BJ (cell line): ENCODE measurements at regions of chr11 and their contacts with region 1.

Region 1: DNA sequence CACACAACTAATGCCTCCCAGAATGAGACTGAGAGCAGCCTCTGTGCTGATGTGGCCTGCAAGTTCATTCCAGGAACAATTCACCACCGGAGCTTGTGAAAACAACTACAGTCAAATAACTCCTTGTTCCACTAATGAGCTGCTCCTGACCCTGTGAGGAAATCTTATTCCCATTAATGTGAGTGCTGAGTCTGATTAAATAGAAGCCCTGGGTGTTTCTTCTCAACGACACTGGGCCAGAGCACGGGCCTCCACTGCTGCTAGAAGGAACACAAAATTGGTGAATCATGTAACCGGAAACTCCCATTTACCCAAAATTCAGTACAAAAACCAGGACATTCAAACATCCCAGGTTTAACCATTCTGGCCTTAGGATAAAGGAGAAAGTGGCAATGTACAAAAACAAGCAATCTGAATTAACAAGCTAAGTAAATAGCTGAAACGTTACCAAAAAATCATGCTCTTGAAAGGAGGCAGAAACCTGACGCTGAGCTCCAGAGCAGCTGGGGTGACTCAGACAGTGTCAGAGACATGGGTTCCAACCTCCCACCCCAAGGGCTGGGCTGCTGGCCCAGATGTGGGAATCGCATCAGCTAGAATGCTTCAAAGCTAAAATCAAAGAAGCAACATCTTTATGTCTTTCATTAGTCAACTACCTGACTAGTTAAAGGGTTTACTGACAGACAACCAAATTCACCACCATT is 26.7 kb downstream of the SERGEF start:
- DNase-seq: peak; percentile 47
- H3K4me3 ChIP-seq: no peak overlapping the region
- H3K27me3 ChIP-seq: no peaks in the 10 kb centered on the region
- CTCF ChIP-seq: no peak

Region 2: GRCh38 chr11:17519061-17519885 is 466.9 kb before region 1 on chr11:
- CTCF ChIA-PET with region 1: no interaction called
- POLR2A ChIA-PET with region 1: no interaction called
- DNase-seq: no peak
- H3K4me3 ChIP-seq: no peak overlapping the region
- H3K27me3 ChIP-seq: peaks cover 7% of the 10 kb centered on the region
- CTCF ChIP-seq: no peak

Region 3: GRCh38 chr11:17760102-17761029 is 225.8 kb before region 1 on chr11:
- CTCF ChIA-PET with region 1: interaction called, 181 read pairs
- POLR2A ChIA-PET with region 1: no interaction called
- DNase-seq: no peak
- H3K4me3 ChIP-seq: no peak overlapping the region
- H3K27me3 ChIP-seq: no peaks in the 10 kb centered on the region; the same call in 1 of the 2 replicates
- CTCF ChIP-seq: peak; percentile 74

Region 4: GRCh38 chr11:17876827-17877226 is 109.3 kb before region 1 on chr11:
- CTCF ChIA-PET with region 1: no interaction called
- POLR2A ChIA-PET with region 1: no interaction called
- DNase-seq: no peak
- H3K4me3 ChIP-seq: no peak overlapping the region
- H3K27me3 ChIP-seq: no peaks in the 10 kb centered on the region
- CTCF ChIP-seq: no peak

Region 5: DNA sequence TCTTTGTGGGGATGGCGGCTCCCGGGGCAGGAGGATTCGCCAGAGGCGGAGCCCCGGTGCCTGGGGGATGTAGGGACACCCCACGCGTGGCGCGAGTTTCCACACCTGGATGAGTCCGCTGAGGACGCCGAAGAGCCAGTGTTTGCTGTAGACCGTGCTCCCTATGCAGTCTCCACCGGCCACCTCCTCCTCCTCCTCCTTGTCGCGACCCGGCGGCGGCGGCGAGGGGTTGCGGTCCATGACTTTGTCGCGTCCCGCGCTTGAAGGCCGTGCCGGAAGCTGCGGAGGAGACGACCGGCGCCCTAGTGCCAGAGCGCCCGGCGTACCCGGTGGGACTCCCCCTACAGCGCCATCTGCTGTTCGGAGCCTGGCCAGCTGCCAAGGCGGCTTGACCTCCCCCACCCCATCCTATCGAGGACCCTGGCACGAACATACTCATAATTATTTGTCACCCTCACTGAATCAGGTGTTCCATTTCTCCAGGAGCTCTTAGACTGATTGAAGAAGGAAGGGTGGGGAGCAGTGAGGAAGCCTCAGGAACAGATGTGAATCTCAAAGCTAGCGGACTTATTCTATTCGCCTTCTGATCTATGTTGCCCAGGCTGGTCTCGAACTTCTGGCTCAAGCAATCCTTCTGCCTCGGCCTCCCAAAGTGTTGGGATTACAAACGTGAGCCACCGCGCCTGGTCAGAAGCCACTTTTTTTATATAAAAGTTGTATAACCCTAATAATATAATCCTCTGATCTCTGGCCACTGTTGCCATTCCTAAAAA is 119.8 kb after region 1 on chr11 and contains the start of gene SAAL1:
- CTCF ChIA-PET with region 1: interaction called, 13 read pairs
- POLR2A ChIA-PET with region 1: no interaction called
- DNase-seq: no peak
- H3K4me3 ChIP-seq: peak within 1 kb of the TSS; percentile 96
- H3K27me3 ChIP-seq: no peaks in the 10 kb centered on the region; the same call in 1 of the 2 replicates
- CTCF ChIP-seq: peak; percentile 75
- polyA plus RNA-seq, gene SAAL1: 8.9 and 13.3 TPM in 2 replicates

Region 6: DNA sequence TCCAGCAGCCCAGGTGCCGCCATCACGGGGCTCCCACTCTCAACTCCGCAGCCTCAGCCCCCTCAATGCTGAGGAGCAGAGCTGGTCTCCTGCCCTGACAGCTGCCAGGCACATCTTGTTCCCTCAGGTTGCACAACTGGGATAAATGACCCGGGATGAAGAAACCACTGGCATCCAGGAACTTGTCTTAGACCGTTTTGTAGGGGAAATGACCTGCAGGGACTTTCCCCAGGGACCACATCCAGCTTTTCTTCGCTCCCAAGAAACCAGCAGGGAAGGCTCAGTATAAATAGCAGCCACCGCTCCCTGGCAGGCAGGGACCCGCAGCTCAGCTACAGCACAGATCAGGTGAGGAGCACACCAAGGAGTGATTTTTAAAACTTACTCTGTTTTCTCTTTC is 279.8 kb after region 1 on chr11 and contains the start of gene SAA1:
- CTCF ChIA-PET with region 1: no interaction called
- POLR2A ChIA-PET with region 1: no interaction called
- DNase-seq: no peak
- H3K4me3 ChIP-seq: no peak within 1 kb of the TSS
- H3K27me3 ChIP-seq: peaks cover 2% of the 10 kb centered on the region; the same call in 1 of the 2 replicates
- CTCF ChIP-seq: no peak
- polyA plus RNA-seq, gene SAA1: 2.3 and 3.4 TPM in 2 replicates